A673 (cell line): ENCODE measurements at regions of chr9 and their contacts with region 1.

Region 1: DNA sequence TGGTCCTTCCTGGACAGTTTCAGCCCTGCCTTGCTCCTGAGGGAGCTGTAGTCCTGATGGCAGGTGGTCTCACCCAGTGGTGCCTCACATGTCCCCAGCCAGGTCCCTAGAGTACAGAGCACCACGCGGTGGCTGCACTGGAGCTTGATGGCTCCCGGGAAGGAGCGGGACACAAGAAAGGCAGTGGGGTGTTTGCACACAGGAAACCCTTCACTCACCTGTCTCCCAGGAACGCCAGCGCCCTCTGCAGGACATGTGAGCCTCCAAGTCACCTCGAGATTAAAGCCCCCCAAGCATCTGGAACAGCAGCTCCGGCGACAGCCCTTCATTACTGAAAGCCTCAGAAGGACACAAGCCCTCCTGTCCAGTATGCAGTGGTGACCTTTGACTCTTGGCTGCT is 19.9 kb upstream of the TMEM250 start:
- DNase-seq: peak; percentile 77
- H3K4me3 ChIP-seq: no peak overlapping the region
- H3K27ac ChIP-seq: no peak overlapping the region
- H3K4me1 ChIP-seq: peaks cover 9% of the 10 kb centered on the region
- H3K27me3 ChIP-seq: no peaks in the 10 kb centered on the region
- CTCF ChIP-seq: peak; percentile 78

Region 2: DNA sequence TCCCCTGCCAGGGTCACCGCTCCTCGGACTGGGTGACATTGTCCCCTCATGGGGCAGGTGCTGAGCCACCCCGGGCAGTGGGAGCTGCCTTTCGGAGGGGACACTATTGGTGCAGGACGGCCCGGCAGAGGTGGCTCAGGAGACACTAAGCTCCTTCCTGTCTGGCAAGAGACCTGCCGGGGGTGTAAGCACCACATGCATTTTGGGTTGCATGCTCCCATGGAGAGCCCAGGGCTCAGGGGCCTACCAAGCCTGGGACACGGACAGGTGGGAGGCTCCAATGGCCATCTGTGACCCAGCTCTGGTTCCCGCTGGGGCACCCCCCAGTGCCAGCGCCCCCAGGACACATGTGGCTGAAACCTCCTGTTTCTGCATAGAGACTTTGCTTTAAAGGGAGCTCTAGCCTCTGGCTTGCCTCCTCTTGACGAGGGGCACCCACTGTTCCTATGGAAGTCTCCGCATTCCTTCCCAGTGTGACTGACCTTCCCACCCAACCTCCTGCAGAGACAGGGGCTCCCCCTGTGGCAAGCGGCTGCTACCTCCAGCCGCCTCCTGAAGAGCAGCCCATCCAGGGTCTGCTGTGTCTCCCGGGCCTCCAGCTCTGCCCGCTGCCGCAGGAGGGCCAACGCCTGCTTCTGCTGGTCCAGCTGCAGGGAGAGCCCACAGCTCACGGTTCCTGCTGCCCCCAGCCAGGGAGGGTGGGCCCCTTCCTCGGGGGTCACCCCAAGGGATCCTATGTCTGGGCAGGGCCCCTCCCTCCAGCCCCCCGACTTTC is 137.3 kb after region 1 on chr9:
- CTCF ChIA-PET with region 1: interaction called, 10 read pairs
- POLR2A ChIA-PET with region 1: no interaction called
- intact Hi-C with region 1: no loop called
- DNase-seq: no peak
- H3K4me3 ChIP-seq: no peak overlapping the region
- H3K27ac ChIP-seq: no peak overlapping the region
- H3K4me1 ChIP-seq: no peaks in the 10 kb centered on the region
- H3K27me3 ChIP-seq: no peaks in the 10 kb centered on the region
- CTCF ChIP-seq: no peak

Region 3: DNA sequence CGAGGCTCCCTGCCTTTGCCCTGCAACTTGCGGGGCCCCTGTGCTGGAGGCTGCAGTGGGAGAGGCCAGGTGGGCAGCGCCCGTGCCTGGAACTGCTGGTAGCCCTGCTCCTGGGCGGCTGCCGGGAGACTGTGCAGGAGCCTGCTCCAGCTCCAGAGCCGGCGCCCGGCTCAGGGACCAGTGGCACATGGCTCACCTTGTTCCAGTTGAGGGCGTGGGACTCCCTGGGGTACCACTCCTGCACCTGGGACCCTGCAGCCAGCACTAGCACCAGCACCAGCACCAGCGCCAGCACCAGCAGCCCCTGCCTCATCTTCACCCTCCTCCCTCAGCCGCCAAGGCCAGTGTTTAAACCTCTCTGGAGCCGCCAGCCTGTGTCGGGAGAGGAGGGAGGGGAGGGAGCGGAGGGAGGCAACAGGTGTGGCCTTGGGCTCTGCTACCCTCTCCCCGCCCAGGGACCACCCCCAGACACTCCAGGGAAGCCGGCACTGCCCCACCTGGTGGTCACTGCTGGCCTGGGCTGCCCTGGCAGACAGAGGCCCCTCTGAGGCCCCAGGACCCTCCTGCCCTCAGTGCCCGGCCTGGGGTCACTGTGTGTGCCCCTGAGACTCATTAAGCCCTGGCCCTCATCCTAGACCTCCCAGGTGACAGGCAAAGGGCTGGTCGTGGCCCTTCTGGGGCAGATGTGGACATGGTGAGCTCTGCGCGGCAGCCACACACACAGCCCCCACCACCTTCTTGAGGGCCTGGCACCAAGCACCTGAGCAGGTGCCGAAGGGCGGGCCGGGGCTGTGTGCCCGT is 604.2 kb after region 1 on chr9 and contains the start of gene LCN10:
- CTCF ChIA-PET with region 1: no interaction called
- POLR2A ChIA-PET with region 1: no interaction called
- intact Hi-C with region 1: no loop called
- DNase-seq: no peak
- H3K4me3 ChIP-seq: no peak within 1 kb of the TSS
- H3K27ac ChIP-seq: no peak within 1 kb of the TSS
- H3K4me1 ChIP-seq: peaks cover 13% of the 10 kb centered on the region
- H3K27me3 ChIP-seq: no peaks in the 10 kb centered on the region
- CTCF ChIP-seq: no peak
- total RNA-seq, gene LCN10: 0.15 and 0.35 TPM in 2 replicates